Left ventricle myocardium inferior (tissue), 1 donor: ENCODE measurements at regions of chr19 and their contacts with region 1.

Region 1: DNA sequence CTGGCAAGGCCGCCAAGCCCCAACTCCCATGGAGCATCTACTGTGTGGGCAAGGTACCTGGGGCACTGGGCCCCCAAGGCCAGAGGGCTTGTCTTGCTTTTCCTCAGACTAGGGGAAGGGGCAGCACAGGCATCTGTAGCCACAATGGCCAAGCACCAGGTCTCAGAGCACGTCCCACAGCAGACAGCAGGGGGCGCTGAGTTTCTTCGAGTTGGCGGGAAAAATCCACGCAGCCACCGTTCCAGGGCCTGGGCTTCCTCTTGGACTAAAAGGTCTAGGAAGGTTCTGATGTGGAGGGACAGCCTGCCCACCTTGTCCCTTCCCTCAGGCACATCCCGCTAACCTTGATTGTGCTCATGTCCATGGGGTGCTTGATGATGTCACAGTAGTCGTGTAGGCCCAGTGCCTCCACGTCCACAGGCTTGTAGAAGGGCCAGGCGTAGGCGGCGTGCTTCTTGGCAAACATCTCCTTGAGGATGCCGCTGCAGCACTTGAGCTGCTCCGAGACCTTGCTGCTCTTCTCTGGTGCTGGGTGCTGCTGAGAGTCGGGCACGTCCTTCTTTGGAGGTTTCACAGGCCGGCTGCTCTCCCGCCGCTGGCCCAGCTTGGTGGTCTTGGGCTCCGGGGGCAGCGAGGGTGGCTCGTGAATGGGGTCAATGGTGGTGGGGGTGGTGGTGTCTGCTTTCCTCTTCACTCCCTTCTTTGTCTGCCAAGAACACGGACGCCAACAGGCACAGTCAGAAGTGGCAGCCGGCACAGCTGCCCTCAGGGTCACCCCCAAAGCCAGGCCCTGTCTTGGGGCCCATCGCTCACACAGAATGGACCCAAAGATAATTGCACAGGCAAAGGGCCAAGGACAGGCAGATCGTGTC is 32.0 kb upstream of the EPHX3 start:
- DNase-seq: peak; percentile 77
- H3K4me3 ChIP-seq: peak overlapping the region; percentile 4
- H3K27ac ChIP-seq: peak overlapping the region; percentile 76
- H3K4me1 ChIP-seq: peaks cover 61% of the 10 kb centered on the region
- H3K27me3 ChIP-seq: no peaks in the 10 kb centered on the region
- CTCF ChIP-seq: peak; percentile 82

Region 2: DNA sequence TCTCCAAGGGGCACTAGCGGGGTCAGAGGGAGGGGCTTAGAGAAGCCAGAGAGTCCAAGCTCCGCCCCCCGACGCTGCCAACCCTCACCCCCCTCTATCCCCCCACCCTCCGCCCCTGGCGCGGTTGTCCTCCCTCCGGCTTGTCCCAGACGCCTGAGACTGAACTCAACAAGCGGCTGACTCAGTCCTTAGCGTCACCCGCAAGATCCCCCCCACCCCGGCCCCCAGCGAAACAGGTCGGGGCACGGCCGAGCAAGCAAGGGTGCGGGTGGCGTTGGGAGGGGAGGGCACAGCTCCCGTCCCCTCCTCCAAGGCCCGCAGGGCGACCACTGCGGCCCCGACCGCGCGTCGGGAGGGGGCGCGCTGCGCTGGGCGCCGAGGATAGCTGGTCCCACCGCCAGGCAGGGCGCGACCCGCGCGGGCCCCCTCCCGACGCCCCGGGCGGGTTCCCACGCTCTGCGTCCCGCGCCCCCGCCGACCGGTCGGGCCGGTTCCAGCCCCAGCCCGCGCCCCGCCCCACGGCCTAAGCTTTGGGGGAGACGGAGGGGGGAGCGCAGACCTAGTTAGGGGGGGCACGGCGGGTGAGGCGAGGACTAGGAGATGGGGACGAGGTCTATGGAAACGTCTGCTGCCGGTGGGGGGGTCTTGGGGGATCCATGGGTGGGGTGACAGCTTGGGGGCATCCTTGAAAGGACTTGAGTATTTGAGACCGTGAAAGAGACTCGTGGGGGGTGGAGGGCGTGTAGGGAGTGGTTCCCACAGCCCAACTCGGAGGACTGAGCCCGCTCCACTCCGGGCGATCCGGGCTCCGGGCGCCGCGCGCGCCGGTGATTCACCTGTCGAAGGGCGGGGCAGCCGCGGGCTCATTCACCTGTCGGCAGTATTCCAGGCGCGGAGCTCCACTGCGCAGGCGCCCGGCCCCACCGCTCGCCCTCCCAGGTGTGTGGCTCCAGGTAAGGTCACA is 68.6 kb before region 1 on chr19:
- intact Hi-C with region 1: no loop called
- DNase-seq: peak; percentile 39
- H3K4me3 ChIP-seq: peak overlapping the region; percentile 66
- H3K27ac ChIP-seq: peak overlapping the region; percentile 83
- H3K4me1 ChIP-seq: peaks cover 35% of the 10 kb centered on the region
- H3K27me3 ChIP-seq: peaks cover 89% of the 10 kb centered on the region
- CTCF ChIP-seq: peak; percentile 23

Region 3: GRCh38 chr19:15323496-15324227 is 59.4 kb after region 1 on chr19:
- intact Hi-C with region 1: no loop called
- DNase-seq: peak; percentile 64
- H3K4me3 ChIP-seq: no peak overlapping the region
- H3K27ac ChIP-seq: peak overlapping the region; percentile 76
- H3K4me1 ChIP-seq: peaks cover 100% of the 10 kb centered on the region
- H3K27me3 ChIP-seq: no peaks in the 10 kb centered on the region
- CTCF ChIP-seq: no peak

Region 4: GRCh38 chr19:15379083-15379995 is 115.0 kb after region 1 on chr19 and contains the start of gene AKAP8:
- intact Hi-C with region 1: loop called (anchors 10 kb)
- DNase-seq: peak; percentile 99
- H3K4me3 ChIP-seq: peak within 1 kb of the TSS; percentile 97
- H3K27ac ChIP-seq: peak within 1 kb of the TSS; percentile 98
- H3K4me1 ChIP-seq: peaks cover 65% of the 10 kb centered on the region
- H3K27me3 ChIP-seq: no peaks in the 10 kb centered on the region
- CTCF ChIP-seq: no peak
- total RNA-seq, gene AKAP8: 21.8 TPM